ENCODE measurements at regions of chr11 and their contacts with region 1.

Region 1: DNA sequence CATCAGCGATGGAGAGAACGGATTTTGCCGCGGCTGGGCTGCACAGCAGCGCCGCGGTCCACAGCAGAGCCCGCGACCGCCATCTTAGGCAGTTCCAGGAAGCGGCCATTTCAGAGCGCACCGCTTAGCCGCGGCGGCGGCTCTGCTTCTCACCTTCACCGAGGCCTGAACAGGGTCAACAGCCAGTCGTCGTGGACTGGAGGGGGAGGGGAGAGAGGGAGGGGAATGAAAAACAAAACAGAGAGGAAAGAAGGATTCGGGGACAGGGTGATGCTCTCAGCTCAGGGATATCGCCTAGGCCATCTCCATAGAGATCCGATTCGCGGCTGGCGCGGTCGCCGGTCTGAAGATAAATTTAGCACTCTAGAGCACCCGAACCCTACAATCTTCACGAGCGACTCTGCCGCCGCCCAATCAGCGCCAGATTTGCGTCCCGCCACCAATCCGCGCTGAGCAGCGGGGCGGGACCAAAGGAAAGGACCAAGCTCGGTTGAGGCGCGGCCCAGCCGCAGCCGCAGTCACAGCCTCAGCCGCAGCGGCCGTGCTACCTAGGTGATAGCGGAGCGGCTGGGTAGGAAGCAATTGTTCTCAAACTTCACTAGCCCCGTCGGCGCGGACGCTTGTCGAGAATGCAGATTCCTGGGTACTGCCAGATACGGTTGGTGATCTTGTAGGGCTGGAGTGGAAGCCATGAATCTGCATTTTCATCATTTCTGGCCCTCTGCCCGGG is at the start of gene ZBED5:
- DNase-seq: peak; percentile 98
- ATAC-seq: peak; percentile 87
- H3K4me3 ChIP-seq: peak within 1 kb of the TSS; percentile 68 to 98 (median 95)
- H3K4me3 Mint-ChIP-seq: peak within 1 kb of the TSS; percentile 98
- H3K27ac ChIP-seq: peak within 1 kb of the TSS; percentile 90 to 98
- H3K27ac Mint-ChIP-seq: peak within 1 kb of the TSS; percentile 99
- H3K4me1 ChIP-seq: peaks cover 21 to 23% of the 10 kb centered on the region in 2 donors
- H3K4me1 Mint-ChIP-seq: peaks cover 40% of the 10 kb centered on the region
- H3K27me3 ChIP-seq: no peaks in the 10 kb centered on the region
- H3K27me3 Mint-ChIP-seq: no peaks in the 10 kb centered on the region
- CTCF ChIP-seq: no peak
- total RNA-seq, gene ZBED5: 168 and 178 TPM in 2 replicates

Region 2: GRCh38 chr11:10750838-10751580 is 106.9 kb before region 1 on chr11 and contains the start of gene CTR9:
- CTCF ChIA-PET with region 1: no interaction called
- POLR2A ChIA-PET with region 1: interaction called, 7 read pairs
- intact Hi-C with region 1: loop called (anchors 5 kb)
- DNase-seq: peak; percentile 95
- ATAC-seq: peak; percentile 92
- H3K4me3 ChIP-seq: peak within 1 kb of the TSS; percentile 77 to 96 (median 92)
- H3K4me3 Mint-ChIP-seq: peak within 1 kb of the TSS; percentile 95
- H3K27ac ChIP-seq: peak within 1 kb of the TSS; percentile 78 to 85
- H3K27ac Mint-ChIP-seq: peak within 1 kb of the TSS; percentile 91
- H3K4me1 ChIP-seq: peaks cover 8 to 12% of the 10 kb centered on the region in 2 donors
- H3K4me1 Mint-ChIP-seq: peaks cover 21% of the 10 kb centered on the region
- H3K27me3 ChIP-seq: no peaks in the 10 kb centered on the region
- H3K27me3 Mint-ChIP-seq: no peaks in the 10 kb centered on the region
- CTCF ChIP-seq: no peak
- total RNA-seq, gene CTR9: 46.7 and 52.0 TPM in 2 replicates

Region 3: DNA sequence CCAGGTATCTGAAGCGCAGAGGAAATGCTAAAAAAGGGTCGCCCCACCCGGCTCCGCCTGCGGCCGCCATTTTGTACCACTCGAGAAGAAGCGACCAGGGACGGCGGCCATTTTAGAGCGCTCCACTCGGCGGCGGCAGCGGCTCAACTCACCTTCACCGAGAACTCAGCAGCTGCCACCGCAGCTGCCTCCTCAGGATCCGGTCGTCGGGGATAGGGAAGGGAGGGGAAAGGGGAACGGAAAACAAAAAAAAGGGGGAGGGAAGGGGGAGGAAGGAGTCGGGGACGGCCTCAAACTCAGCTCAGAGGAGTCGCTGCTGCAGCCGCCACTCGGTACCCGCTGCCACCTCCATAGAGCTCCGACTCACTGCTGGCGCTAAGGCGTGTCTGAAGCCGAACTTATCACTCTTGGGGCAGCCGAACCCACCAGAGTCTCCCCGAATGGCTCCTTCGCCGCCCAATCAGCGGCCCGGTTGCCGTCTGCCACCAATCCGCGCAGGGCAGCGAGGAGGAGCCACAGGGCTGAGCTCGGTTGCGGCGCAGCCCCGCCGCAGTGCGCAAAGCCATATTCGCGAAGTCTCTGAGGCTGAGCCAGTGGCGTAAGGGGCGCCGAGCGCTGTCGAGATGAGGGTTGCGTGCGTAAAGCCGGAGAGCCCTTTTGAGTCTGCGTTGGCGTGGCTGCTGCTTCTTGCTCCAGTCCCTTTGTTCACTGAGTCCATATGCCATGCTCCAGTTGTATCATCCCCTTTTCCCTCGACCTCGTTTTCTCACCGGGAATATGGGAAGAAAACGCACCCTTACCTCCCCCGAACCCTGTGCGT is 49.1 kb before region 1 on chr11 and contains the start of gene EIF4G2:
- CTCF ChIA-PET with region 1: interaction called, 27 read pairs
- POLR2A ChIA-PET with region 1: interaction called, 147 read pairs
- intact Hi-C with region 1: loop called (anchors 1 kb)
- DNase-seq: peak; percentile 99
- ATAC-seq: peak; percentile 89
- H3K4me3 ChIP-seq: peak within 1 kb of the TSS; percentile 89 to 97 (median 94)
- H3K4me3 Mint-ChIP-seq: peak within 1 kb of the TSS; percentile 99
- H3K27ac ChIP-seq: peak within 1 kb of the TSS; percentile 92 to 96
- H3K27ac Mint-ChIP-seq: peak within 1 kb of the TSS; percentile 99
- H3K4me1 ChIP-seq: peaks cover 24 to 26% of the 10 kb centered on the region in 2 donors
- H3K4me1 Mint-ChIP-seq: peaks cover 39% of the 10 kb centered on the region
- H3K27me3 ChIP-seq: no peaks in the 10 kb centered on the region
- H3K27me3 Mint-ChIP-seq: no peaks in the 10 kb centered on the region
- CTCF ChIP-seq: no peak
- total RNA-seq, gene EIF4G2: 530 and 592 TPM in 2 replicates

Region 4: DNA sequence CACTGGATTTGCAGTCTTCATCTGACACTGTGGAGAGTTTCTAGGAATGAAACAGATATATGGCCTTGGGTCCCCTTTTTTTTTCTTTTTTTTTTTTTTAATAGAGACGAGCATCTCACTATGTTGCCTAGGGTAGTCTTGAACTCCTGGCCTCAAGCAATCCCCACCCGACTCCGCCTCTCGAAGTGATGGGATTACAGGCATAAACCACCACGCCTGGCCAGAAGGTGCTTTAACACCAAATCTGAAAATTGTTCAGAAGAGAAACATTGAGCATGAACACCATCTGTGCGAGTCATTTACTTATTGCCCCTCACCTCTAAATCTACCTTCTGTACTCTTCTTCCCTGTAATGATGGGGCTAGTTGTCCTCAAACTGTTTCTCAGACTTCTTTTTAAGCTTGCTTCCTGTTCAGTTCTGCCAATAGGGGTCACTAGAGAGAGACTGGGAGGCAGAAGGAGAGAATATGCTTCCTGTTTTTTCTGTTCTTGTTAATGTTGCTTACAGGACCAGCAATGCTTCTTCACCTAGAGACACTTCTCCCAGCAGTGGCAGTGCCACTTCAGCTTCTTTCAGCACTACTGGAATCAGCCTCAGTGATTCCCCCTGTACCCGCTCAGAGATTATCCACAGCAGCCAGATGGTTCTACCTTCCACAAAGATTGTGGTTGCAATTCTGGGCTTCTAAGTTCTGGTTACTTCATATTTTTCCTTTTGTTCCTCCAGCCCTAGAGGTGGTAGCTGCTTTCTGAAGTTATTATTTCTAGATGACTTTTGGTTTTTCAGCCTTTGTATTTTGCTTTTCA is 20.7 kb after region 1 on chr11:
- CTCF ChIA-PET with region 1: interaction called, 4 read pairs
- POLR2A ChIA-PET with region 1: interaction called, 7 read pairs
- intact Hi-C with region 1: loop called (anchors 1 kb)
- DNase-seq: peak; percentile 79
- ATAC-seq: peak; percentile 82
- H3K4me3 ChIP-seq: no peak overlapping the region
- H3K4me3 Mint-ChIP-seq: no peak overlapping the region
- H3K27ac ChIP-seq: no peak overlapping the region
- H3K27ac Mint-ChIP-seq: peak overlapping the region; percentile 57
- H3K4me1 ChIP-seq: peaks cover 7 to 9% of the 10 kb centered on the region in 2 donors
- H3K4me1 Mint-ChIP-seq: peaks cover 8% of the 10 kb centered on the region
- H3K27me3 ChIP-seq: no peaks in the 10 kb centered on the region
- H3K27me3 Mint-ChIP-seq: no peaks in the 10 kb centered on the region
- CTCF ChIP-seq: peak; percentile 87

Region 5: DNA sequence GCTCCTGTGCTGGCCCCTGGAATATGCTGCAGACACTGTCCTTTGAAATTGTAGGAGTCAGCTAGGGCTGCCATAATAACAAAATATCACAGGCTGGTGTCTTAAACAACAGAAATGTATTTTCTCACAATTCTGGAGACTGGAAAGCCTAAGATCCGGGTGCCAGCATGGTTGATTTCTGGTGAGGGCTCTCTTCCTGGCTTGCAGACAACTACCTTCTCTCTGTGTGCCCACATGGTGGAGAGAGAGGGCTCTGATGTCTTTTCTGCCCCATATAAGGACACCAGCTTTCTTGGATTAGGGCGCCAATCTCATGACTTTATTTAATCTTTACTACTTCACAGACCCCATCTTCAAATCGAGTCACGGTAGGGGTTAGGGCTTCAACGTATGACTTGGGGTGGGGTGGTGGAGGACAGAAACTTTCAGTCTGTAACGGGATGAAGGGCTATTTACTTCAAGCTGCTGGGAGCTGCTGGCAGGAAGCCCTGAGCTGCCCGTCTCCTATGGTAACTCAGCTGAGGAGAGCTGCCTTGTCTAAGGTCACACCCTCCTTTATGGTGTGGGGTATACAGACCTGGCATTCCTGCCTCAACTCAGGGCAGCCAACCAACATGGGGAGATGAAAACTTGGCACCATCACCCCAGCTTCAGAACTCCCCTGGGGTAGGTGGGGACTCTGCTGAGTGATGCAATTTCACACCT is 142.9 kb after region 1 on chr11:
- CTCF ChIA-PET with region 1: no interaction called
- POLR2A ChIA-PET with region 1: no interaction called
- intact Hi-C with region 1: no loop called
- DNase-seq: no peak
- ATAC-seq: no peak
- H3K4me3 ChIP-seq: no peak overlapping the region
- H3K4me3 Mint-ChIP-seq: no peak overlapping the region
- H3K27ac ChIP-seq: no peak overlapping the region
- H3K27ac Mint-ChIP-seq: no peak overlapping the region
- H3K4me1 ChIP-seq: peaks cover 4 to 6% of the 10 kb centered on the region in 2 donors
- H3K4me1 Mint-ChIP-seq: peaks cover 15% of the 10 kb centered on the region
- H3K27me3 ChIP-seq: peaks cover 0 to 17% (median 7%) of the 10 kb centered on the region in 4 experiments
- H3K27me3 Mint-ChIP-seq: peaks cover 31% of the 10 kb centered on the region
- CTCF ChIP-seq: no peak

Measured in B cell (primary cell).